Naive thymus-derived CD4-positive, alpha-beta T cell (primary cell): ENCODE measurements at regions of chr14 and their contacts with region 1.

Region 1: DNA sequence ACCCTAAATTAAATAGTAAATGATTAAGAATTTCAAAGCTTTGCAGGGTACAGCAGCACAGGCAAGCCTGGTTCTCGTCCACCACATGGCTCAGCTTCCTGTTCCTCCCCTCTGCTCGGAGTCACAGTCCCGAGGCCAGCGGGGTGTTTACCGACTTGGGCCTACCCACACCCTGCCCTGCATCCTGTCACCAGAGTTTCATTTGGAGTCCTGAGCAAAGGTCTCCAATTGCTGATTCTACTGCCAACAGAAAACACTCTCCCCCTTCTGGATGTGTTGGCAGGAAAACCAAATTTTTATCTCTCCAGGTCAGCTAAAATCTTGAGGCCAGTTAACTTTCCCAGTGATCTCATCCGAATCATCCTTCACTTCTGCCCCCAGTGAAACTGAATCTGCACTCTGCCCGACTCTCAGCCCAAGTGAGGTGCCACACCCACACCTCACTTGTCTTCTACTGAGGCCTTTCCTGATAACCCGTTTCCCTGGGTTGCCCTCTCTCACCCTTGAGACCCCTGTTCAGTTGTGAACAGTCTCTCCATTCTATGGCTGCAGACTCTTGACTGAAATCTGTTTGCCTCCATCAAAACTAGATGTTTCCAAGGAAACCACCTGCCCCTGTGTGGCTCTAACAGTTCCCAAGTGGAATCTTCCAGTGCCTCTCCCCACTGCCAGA is 71.2 kb downstream of the VCPKMT start:
- DNase-seq: peak in 8 of 9 donors; percentile 39 to 74 (median 62)
- ATAC-seq: peak; percentile 86
- H3K4me3 ChIP-seq: no peak overlapping the region
- H3K4me3 Mint-ChIP-seq: peak overlapping the region; percentile 50 to 89 (median 74)
- H3K27ac ChIP-seq: peak overlapping the region; percentile 69
- H3K27ac Mint-ChIP-seq: peak overlapping the region; percentile 88 to 99 (median 96)
- H3K4me1 ChIP-seq: peaks cover 51 to 63% of the 10 kb centered on the region in 2 donors
- H3K4me1 Mint-ChIP-seq: peaks cover 49 to 83% (median 71%) of the 10 kb centered on the region in 7 donors
- H3K27me3 ChIP-seq: no peaks in the 10 kb centered on the region
- H3K27me3 Mint-ChIP-seq: no peaks in the 10 kb centered on the region

Region 2: DNA sequence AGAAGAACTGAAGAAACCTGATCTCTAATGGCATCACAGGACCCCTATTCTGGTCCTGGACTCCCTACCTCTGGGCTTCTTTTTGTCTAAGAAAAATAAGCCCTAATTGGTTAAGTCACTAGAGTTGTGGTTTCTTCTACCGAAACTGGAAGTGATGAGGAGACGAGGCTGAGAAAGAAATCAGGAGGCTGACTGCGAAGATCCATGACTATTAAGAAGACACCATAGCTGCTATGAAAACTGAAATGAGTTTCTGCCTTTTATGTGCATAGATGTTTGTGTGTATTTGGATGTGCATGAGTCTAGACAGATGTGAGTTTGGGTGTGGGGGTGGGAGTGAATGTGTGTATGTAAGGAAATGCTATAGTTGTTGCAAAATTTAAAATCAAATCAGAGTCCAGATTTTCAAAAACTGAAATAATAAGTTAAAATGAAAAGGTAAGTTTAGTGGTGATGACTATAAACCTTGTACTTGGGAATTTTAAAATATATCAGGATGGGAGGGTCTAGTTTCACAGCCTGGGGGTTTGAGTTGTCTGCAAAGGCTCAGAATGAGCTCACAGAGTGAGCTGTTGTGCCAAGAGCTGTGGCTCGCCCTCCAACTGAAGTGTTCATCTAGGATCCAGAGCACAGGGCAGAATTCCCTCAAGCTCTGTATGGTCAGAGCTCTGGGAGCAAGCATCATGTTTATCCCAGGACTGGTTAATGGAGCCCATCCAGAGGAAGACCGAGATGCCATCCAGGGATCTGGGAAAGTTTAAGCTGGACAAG is 23.7 kb before region 1 on chr14:
- CTCF ChIA-PET with region 1: no interaction called
- POLR2A ChIA-PET with region 1: interaction called, 7 read pairs
- intact Hi-C with region 1: loop called (anchors 2 kb)
- DNase-seq: peak in 1 of 9 donors; percentile 23
- ATAC-seq: no peak
- H3K4me3 ChIP-seq: no peak overlapping the region
- H3K4me3 Mint-ChIP-seq: peak overlapping the region in 9 of 10 donors; percentile 1 to 68 (median 49)
- H3K27ac ChIP-seq: no peak overlapping the region
- H3K27ac Mint-ChIP-seq: peak overlapping the region in 5 of 9 donors; percentile 0 to 81 (median 74)
- H3K4me1 ChIP-seq: peaks cover under 1 to 5% of the 10 kb centered on the region in 2 donors
- H3K4me1 Mint-ChIP-seq: peaks cover 12 to 42% (median 28%) of the 10 kb centered on the region in 7 donors
- H3K27me3 ChIP-seq: no peaks in the 10 kb centered on the region
- H3K27me3 Mint-ChIP-seq: no peaks in the 10 kb centered on the region

Region 3: DNA sequence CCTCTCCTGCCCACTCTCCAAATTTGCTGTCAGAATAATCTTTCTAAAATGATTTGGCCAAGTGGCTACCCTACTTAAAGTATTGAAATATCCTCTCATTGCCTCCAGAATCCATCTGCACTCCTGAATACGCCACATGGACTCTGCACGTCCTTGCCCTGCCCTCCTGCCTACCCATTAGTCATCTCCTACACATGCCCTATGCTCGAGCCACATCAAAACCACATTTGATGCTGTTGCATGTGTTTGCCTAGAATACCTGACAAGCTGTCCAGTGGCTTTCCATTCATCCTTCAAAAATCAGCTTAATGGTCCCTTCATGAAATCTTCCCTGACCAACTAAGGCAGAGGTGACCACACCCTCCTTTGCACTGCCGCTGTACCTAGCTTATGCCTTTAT is 54.2 kb after region 1 on chr14:
- CTCF ChIA-PET with region 1: interaction called, 8 read pairs
- POLR2A ChIA-PET with region 1: interaction called, 29 read pairs
- intact Hi-C with region 1: loop called (anchors 1 to 2 kb)
- DNase-seq: no peak
- ATAC-seq: no peak
- H3K4me3 ChIP-seq: no peak overlapping the region
- H3K4me3 Mint-ChIP-seq: peak overlapping the region in 9 of 10 donors; percentile 9 to 61 (median 38)
- H3K27ac ChIP-seq: no peak overlapping the region
- H3K27ac Mint-ChIP-seq: peak overlapping the region; percentile 13 to 87 (median 79)
- H3K4me1 ChIP-seq: peaks cover 23 to 67% of the 10 kb centered on the region in 2 donors
- H3K4me1 Mint-ChIP-seq: peaks cover 39 to 92% (median 76%) of the 10 kb centered on the region in 7 donors
- H3K27me3 ChIP-seq: no peaks in the 10 kb centered on the region
- H3K27me3 Mint-ChIP-seq: peaks cover 0 to 5% (median 0%) of the 10 kb centered on the region in 5 donors